ENCODE measurements at regions of chr4 and their contacts with region 1.

Region 1: DNA sequence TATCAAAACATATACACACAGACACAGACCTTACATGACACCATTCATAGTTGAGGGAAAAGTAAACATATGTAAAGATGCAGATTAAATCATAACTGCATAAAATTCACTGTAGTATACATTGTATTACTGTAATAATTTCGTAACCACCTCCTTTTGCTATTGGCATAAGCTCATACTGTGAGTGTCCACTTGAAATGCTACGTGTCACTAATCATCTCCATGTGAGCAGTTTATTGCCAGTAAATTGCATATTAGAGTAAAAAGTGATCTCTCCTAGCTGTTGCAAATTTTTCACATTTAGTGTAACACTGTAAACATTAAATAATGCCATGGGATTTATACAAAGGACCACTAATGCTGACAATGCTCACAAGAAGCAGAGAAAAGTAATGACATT is 256.7 kb upstream of the GNPDA2 start:
- DNase-seq: no peak
- H3K4me3 ChIP-seq: no peak overlapping the region
- H3K27ac ChIP-seq: no peak overlapping the region
- H3K4me1 ChIP-seq: no peaks in the 10 kb centered on the region
- H3K27me3 ChIP-seq: no peaks in the 10 kb centered on the region
- CTCF ChIP-seq: no peak
- EP300 ChIP-seq: no peak
- POLR2A ChIP-seq: no peak

Region 2: GRCh38 chr4:45033676-45034419 is 50.8 kb after region 1 on chr4:
- intact Hi-C with region 1: loop called in 1 of 4 experiments (anchors 2 kb)
- DNase-seq: no peak
- H3K4me3 ChIP-seq: no peak overlapping the region
- H3K27ac ChIP-seq: no peak overlapping the region
- H3K4me1 ChIP-seq: no peaks in the 10 kb centered on the region
- H3K27me3 ChIP-seq: no peaks in the 10 kb centered on the region
- CTCF ChIP-seq: no peak
- EP300 ChIP-seq: no peak
- POLR2A ChIP-seq: no peak

Region 3: GRCh38 chr4:45865781-45866180 is 882.7 kb after region 1 on chr4:
- intact Hi-C with region 1: loop called in 1 of 4 experiments (anchors 10 kb)
- DNase-seq: no peak
- H3K4me3 ChIP-seq: no peak overlapping the region
- H3K27ac ChIP-seq: no peak overlapping the region
- H3K4me1 ChIP-seq: no peaks in the 10 kb centered on the region
- H3K27me3 ChIP-seq: no peaks in the 10 kb centered on the region
- CTCF ChIP-seq: no peak
- EP300 ChIP-seq: no peak
- POLR2A ChIP-seq: no peak

Measured in ovary (tissue), 10 donors.